ENCODE measurements at regions of chr20 and their contacts with region 1.

Region 1: DNA sequence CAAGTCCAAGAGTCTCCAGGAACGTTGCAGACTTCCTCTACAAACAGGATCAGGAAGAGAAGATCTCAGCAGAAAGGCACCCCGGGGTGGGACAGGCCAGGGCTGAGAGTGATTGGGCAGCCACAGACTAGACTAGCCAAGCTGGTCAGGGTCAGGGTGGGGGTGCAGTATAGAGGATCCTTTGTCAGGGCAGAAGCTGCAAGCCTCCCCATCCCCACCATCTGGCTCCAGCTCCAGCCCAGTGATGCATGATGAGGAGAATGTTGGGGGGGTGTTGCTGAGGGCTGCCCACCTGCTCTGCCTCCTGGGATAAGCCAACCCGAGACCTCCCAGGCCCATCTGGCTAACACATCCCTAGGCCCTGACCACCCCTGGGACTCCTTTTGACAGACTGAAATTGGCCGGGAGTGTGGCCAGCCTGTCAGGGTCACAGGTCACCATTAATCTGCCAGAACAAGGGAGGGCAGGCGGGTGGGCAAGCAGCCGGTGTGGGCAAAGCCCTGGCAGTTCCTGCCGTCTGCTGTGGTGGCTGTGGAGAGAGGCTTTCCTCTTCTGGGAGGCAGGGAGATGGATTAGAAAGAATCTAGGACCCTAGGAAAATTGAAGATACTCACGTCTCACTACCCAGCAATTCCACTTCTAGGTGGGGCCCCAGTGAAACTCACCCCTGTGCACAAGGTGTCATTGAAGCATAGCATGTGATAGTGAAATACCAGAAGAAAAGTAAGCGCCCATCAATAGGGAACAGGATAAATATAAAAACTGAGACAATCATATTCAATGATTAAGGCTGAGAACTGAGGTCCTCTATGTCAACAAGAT is 22.1 kb upstream of the SNTA1 start:
- DNase-seq: no peak
- H3K4me3 ChIP-seq: no peak overlapping the region
- H3K27ac ChIP-seq: no peak overlapping the region
- H3K4me1 ChIP-seq: peaks cover 17% of the 10 kb centered on the region
- H3K27me3 ChIP-seq: no peaks in the 10 kb centered on the region
- CTCF ChIP-seq: no peak

Region 2: GRCh38 chr20:33359462-33359861 is 106.2 kb before region 1 on chr20:
- intact Hi-C with region 1: no loop called
- DNase-seq: no peak
- H3K4me3 ChIP-seq: no peak overlapping the region
- H3K27ac ChIP-seq: no peak overlapping the region
- H3K4me1 ChIP-seq: peaks cover 19% of the 10 kb centered on the region
- H3K27me3 ChIP-seq: no peaks in the 10 kb centered on the region
- CTCF ChIP-seq: no peak

Region 3: DNA sequence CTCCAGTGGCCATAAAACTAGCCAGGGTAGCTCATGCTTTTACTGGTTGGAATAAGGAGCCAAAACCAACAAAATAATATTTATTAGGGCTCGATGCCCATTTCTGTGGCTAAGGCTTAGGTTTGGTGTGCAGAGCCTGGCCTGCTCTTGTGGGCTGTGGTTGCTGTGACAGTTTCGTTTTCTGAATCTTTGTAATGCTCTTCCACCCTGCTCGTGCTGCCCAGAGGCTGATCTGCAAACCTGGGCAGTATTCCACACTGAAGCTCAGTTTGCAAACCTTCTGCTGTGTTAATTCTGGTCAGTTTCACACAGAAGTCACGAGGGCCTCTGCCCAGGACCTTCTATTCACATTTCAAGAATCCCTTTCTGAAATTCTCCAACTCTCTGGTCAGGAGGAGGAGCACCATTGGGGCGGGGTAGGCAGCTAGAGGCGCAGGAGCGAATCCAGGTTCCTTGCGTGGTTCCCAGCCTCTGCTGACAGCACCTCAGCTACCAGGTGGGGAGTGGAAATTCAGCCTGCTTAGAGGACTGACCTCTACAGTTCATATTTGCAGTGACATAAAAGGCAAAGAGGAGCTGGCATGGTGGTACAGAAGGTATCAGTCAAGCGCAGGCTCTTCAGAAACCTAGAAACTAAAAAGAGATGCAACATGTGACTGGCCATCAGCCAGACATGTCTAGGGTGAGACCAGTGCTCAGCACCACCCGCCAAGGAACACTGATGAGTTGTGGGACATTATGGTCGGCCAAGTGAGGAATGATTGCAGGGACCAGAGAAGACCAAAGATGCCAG is 182.1 kb after region 1 on chr20:
- intact Hi-C with region 1: loop called (anchors 10 kb)
- DNase-seq: peak; percentile 14
- H3K4me3 ChIP-seq: peak overlapping the region; percentile 5
- H3K27ac ChIP-seq: peak overlapping the region; percentile 59
- H3K4me1 ChIP-seq: peaks cover 34% of the 10 kb centered on the region
- H3K27me3 ChIP-seq: no peaks in the 10 kb centered on the region
- CTCF ChIP-seq: no peak

Measured in left ventricle myocardium inferior (tissue), 1 donor.